ENCODE measurements at regions of chr14 and their contacts with region 1.

Region 1: DNA sequence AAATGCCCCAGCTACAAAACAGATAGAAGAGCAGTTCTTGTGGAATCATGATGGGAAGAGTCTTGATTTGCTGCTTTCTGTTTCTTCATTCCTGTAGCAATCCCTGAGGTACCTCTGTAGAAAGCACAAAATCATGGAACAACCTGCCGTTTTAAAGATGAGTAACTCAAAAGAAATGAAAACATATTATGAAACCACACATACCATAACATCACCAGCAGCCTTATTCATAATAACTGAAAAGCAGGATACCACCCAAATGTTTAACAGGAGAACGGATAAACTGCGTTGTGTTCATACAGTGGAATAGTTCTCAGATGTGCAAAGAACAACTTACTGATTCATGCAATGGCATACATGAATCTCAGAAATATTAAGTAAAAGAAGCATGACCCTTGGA is 188.1 kb downstream of the RGS6 start:
- DNase-seq: no peak
- ATAC-seq: no peak
- H3K4me3 ChIP-seq: no peak overlapping the region
- H3K27ac ChIP-seq: no peak overlapping the region
- H3K4me1 ChIP-seq: peaks cover 0 to 8% (median 0%) of the 10 kb centered on the region in 9 donors
- H3K27me3 ChIP-seq: no peaks in the 10 kb centered on the region
- CTCF ChIP-seq: no peak

Region 2: DNA sequence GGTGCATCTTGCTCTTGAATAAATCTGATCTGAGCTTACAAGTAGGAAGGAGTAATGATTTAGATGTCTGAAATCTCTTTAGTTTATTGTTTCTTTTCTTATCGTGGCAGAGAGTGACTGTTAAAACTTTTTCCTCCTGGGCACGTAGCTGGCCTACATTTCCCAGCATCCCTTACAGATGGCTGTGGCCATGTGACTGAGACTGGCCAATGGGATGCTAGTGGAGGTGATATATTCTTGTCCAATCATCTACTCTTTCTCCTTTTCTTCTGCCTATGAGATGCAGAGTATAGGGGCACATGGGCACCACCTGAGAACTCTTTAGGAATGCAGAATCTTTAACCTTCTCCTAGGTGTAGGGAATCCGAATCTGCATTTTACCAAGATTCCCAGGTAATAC is 49.2 kb after region 1 on chr14:
- intact Hi-C with region 1: loop called in 1 of 10 experiments (anchors 2 kb)
- DNase-seq: no peak
- ATAC-seq: no peak
- H3K4me3 ChIP-seq: no peak overlapping the region
- H3K27ac ChIP-seq: no peak overlapping the region
- H3K4me1 ChIP-seq: peaks cover 0 to 16% (median 5%) of the 10 kb centered on the region in 9 donors
- H3K27me3 ChIP-seq: no peaks in the 10 kb centered on the region
- CTCF ChIP-seq: no peak

Region 3: DNA sequence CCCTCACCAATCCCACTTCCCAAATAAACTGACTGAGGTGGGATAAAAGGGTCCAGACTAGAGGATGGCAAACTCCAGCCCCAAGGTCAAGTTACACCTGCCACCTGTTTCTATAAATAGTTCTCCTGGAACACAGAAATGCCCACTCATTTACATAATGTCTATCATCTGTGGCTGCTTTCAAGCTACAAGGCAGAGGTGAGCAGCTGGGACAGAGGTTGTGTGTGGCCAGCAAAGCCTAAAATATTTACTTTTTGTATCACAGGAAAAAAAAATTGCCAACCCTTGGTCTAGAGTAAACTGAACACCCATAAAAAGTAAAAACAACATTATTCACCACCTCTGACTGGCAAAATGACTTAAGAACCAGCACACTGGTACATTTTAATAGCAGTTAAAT is 81.3 kb after region 1 on chr14:
- intact Hi-C with region 1: no loop called
- DNase-seq: no peak
- ATAC-seq: no peak
- H3K4me3 ChIP-seq: no peak overlapping the region
- H3K27ac ChIP-seq: no peak overlapping the region
- H3K4me1 ChIP-seq: peaks cover 0 to 11% (median 0%) of the 10 kb centered on the region in 9 donors
- H3K27me3 ChIP-seq: no peaks in the 10 kb centered on the region
- CTCF ChIP-seq: no peak

Region 4: DNA sequence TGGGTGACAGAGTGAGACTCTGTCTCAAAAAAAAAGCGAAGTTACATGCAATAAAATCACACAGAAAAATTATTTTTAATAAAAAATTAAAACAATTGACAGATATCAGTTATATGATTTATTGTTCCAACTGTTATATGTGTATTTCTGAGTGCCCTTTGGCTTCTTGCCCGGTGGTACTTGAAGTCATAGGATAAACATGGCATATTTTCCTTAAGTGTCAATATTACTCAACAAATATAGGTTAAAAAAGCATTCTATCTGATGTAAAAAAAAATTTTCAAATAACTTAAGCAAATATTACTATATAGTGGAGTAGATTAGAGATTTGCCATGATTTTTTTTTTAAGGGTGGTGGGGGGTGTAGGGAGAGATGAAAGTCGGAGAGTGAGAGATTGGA is 971.5 kb after region 1 on chr14:
- intact Hi-C with region 1: loop called in 1 of 10 experiments (anchors 5 kb)
- DNase-seq: no peak
- ATAC-seq: no peak
- H3K4me3 ChIP-seq: no peak overlapping the region
- H3K27ac ChIP-seq: no peak overlapping the region
- H3K4me1 ChIP-seq: peaks cover 0 to 3% (median 0%) of the 10 kb centered on the region in 9 donors
- H3K27me3 ChIP-seq: no peaks in the 10 kb centered on the region
- CTCF ChIP-seq: no peak

Measured in heart right ventricle (tissue), 16 donors.